ENCODE measurements at regions of chr1 and their contacts with region 1.

Region 1: DNA sequence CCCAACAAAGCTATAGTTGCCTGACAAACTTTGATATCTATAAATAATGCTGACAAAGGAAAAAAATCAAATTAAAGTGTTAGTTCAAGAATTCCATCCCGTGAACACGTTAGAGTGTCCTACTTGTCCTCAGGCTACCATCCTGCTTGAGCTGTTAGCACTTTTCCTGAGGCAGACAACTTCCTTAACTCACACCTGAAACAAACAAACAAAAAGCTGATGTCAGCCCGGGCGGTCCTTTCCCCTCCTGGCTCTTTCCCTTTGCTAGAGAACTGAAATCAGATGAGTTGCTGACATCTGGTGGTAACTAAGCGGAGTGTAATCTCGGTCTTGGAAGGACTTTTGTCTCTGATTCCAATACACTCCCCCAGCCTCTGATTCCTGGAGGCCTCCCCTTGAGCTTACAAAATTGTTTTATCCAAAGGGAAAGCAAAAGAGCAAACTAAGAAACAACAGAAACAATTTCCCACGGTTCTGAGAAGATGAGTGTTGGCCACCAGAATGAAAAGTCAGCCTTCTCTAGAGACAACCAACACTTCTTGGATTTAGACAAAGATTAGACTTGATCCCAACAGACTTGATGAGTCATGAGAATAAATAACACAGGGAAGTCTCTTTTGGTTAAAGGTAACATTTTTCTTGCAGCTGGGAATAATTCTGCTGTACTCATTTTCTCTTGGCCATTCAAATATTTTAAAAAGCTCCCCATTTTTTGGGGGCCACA is 135.4 kb downstream of the PROX1 start:
- DNase-seq: peak; percentile 32
- H3K4me3 ChIP-seq: no peak overlapping the region
- H3K27ac ChIP-seq: no peak overlapping the region
- H3K4me1 ChIP-seq: no peaks in the 10 kb centered on the region
- CTCF ChIP-seq: peak; percentile 55

Region 2: DNA sequence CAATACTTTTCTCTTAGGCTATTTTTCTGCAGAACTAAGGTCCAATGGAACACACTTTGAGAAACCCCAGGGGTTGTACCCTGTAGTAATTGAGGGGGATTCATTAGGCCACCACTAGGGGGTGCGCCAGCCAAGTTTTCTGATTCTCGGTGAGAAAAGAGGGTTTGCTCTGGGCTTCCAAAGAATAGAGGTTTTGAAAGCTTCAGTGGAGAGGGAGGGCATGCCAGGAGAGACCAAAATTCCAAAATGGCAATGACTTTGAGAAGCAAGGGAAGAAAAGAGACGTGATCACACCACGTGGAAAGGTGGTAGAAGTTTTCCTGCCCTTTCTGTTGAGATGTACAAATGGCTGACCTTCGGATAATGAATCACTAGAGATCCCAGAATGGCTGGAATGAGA is 748.9 kb before region 1 on chr1:
- CTCF ChIA-PET with region 1: no interaction called
- POLR2A ChIA-PET with region 1: no interaction called
- intact Hi-C with region 1: loop called (anchors 10 kb)
- DNase-seq: peak; percentile 54
- H3K4me3 ChIP-seq: no peak overlapping the region
- H3K27ac ChIP-seq: no peak overlapping the region
- H3K4me1 ChIP-seq: no peaks in the 10 kb centered on the region
- CTCF ChIP-seq: peak; percentile 99

Region 3: GRCh38 chr1:215777370-215777925 is 1654.2 kb after region 1 on chr1:
- CTCF ChIA-PET with region 1: no interaction called
- POLR2A ChIA-PET with region 1: no interaction called
- intact Hi-C with region 1: loop called (anchors 10 kb)
- DNase-seq: no peak
- H3K4me3 ChIP-seq: no peak overlapping the region
- H3K27ac ChIP-seq: no peak overlapping the region
- H3K4me1 ChIP-seq: no peaks in the 10 kb centered on the region
- CTCF ChIP-seq: no peak